Activated T-helper 1 cell treated with anti-CD3 and anti-CD28 coated beads, Interleukin-12 subunit alpha, Interleukin-12 subunit beta, Interleukin-2, Interleukin-4 antibody, amounts not matched to agents 30 ng/mL and 10 ng/mL and 1 ng/mL, durations not matched to agents 14 hours and 24 hours and 36 hours (primary cell): ENCODE measurements at regions of chr2 and their contacts with region 1.

Region 1: GRCh38 chr2:208040199-208041171 is 15.2 kb upstream of the PLEKHM3 start:
- DNase-seq: peak; percentile 56
- H3K4me3 Mint-ChIP-seq: no peak overlapping the region
- H3K27ac Mint-ChIP-seq: no peak overlapping the region
- H3K4me1 Mint-ChIP-seq: no peaks in the 10 kb centered on the region
- H3K27me3 Mint-ChIP-seq: peaks cover 4% of the 10 kb centered on the region

Region 2: GRCh38 chr2:207769597-207770486 is 270.6 kb before region 1 on chr2 and contains the start of gene FZD5:
- intact Hi-C with region 1: loop called (anchors 2 kb)
- DNase-seq: peak; percentile 77
- H3K4me3 Mint-ChIP-seq: peak within 1 kb of the TSS; percentile 86
- H3K27ac Mint-ChIP-seq: peak within 1 kb of the TSS; percentile 31
- H3K4me1 Mint-ChIP-seq: peaks cover 25% of the 10 kb centered on the region
- H3K27me3 Mint-ChIP-seq: peaks cover 48% of the 10 kb centered on the region
- total RNA-seq, gene FZD5: 0.86 and 1.0 TPM in 2 replicates

Region 3: DNA sequence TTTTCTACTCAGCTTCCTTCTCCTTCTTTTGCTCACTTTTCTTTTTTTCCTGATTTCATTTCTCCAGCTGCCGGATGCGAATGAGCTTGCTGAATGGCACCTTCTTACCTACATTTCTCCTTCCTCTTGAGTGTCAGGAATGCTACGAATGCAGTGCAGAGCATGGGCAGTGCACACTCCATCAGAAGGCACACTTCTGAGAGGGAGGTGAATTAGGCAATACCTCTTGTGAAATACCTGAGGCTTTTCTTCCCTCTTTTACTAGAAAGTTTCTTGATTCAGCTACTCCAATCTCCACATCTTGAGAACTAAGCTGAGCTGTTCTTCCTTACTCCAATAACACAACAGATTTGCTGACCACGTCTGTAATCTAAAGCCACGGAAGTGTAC is 66.3 kb before region 1 on chr2:
- intact Hi-C with region 1: no loop called
- DNase-seq: no peak
- H3K4me3 Mint-ChIP-seq: no peak overlapping the region
- H3K27ac Mint-ChIP-seq: no peak overlapping the region
- H3K4me1 Mint-ChIP-seq: peaks cover 4% of the 10 kb centered on the region
- H3K27me3 Mint-ChIP-seq: no peaks in the 10 kb centered on the region

Region 4: DNA sequence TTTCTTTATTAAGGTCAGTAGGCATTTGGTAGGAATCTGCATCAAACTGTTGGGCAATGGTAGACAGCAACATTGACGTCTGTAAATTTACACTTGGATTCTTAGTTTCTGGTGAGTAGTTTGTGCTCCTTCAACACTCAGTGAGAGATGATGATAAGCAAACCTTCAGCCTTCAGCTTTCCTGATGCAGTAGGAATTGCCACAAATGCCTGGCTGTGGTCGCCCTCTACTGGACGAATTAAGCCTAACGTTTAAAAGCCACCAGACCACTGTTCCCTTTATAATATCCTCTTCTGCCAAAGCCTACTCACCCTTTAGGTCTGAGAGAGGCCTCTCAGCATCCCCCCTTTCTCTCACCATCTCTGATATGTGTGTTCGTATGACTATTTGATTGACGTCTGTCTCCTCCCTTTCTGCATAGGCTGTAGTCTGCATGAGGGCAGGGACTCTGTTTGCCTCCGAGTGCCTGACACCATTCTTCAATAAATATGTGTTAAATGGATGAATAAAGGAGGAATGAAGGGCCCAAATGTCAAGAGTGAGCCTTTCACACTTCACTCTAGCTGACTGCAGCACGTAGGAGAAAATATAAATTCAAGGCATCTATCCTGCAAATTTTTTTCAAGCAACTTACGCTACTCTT is 31.9 kb after region 1 on chr2:
- intact Hi-C with region 1: loop called (anchors 1 kb)
- DNase-seq: peak; percentile 19
- H3K4me3 Mint-ChIP-seq: no peak overlapping the region
- H3K27ac Mint-ChIP-seq: no peak overlapping the region
- H3K4me1 Mint-ChIP-seq: no peaks in the 10 kb centered on the region
- H3K27me3 Mint-ChIP-seq: peaks cover 5% of the 10 kb centered on the region